ENCODE measurements at regions of chr10 and their contacts with region 1.

Region 1: DNA sequence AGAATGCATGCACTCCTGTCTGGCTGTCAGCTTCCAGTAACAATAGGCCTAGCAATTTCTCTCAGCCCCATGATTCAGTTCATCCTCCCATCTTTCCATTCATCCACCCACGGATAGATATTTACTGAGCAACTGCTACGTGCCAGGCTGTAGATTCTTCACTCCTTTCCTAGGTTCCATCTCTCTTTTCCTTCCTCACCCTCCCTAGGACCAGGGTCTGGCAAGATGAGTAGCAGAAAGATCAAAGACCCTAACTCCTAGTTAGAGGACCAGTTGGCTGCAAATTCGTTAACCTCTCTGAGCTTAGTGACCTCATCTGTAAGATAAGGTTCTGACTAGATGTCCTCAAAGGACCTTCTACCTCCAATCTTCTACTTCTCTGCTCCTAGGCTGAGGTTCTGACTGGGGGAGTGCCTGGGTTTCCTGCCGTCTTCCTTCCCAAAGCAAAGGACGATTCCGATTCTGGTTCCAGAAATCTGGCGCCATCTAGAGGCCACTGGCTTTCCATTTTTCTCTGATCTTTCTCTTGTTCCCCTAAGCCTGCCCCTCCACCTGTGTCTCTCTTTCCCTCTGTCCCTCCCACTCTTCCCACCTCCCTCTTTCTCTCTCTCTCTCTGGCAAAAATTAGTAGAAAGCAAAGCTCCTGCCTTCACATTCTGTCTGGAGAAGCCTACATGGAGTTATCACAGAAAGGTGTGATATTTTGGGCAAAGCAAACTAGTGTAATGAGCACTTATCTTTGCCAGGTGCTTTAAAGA is 26.2 kb downstream of the TBATA start:
- DNase-seq: peak; percentile 44 to 87 (median 72)
- H3K4me3 ChIP-seq: no peak overlapping the region
- H3K27ac ChIP-seq: no peak overlapping the region
- H3K27me3 ChIP-seq: no peaks in the 10 kb centered on the region
- CTCF ChIP-seq: peak; percentile 44 to 98 (median 81)

Region 2: GRCh38 chr10:70461215-70461986 is 297.5 kb before region 1 on chr10:
- intact Hi-C with region 1: loop called (anchors 5 to 10 kb)
- DNase-seq: peak in 7 of 10 donors; percentile 48 to 69 (median 60)
- H3K4me3 ChIP-seq: no peak overlapping the region
- H3K27ac ChIP-seq: peak overlapping the region in 19 of 59 donors; percentile 2 to 63 (median 28)
- H3K27me3 ChIP-seq: no peaks in the 10 kb centered on the region
- CTCF ChIP-seq: peak; percentile 52 to 89 (median 80)

Region 3: DNA sequence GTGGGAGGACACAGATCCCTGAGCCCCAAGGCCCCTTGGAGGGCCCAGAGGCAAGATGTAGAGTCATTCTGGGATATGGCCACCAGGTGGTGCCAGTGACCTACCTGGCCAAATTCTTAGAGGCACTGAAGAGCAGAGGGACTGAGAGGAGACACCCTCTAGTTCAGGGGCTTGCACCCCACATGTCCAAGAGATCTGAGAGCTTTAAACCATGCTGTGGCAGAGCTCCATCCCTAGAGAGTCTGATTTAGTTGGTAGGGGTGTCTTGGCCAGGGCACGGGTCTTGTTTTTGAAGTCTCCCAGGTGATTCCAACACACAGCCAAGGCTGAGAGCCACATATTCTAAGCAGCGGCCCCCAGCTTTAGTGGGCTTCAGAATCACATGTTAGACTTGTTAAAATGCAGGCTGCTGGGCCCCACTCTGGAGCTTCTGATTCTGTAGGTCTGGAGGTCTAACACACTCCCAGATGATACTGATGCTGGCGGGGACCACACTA is 208.9 kb before region 1 on chr10:
- intact Hi-C with region 1: loop called (anchors 1 to 2 kb)
- DNase-seq: peak; percentile 57 to 79 (median 64)
- H3K4me3 ChIP-seq: no peak overlapping the region
- H3K27ac ChIP-seq: peak overlapping the region in 1 of 59 donors; percentile 58
- H3K27me3 ChIP-seq: no peaks in the 10 kb centered on the region
- CTCF ChIP-seq: peak; percentile 82 to 97 (median 93)

Region 4: DNA sequence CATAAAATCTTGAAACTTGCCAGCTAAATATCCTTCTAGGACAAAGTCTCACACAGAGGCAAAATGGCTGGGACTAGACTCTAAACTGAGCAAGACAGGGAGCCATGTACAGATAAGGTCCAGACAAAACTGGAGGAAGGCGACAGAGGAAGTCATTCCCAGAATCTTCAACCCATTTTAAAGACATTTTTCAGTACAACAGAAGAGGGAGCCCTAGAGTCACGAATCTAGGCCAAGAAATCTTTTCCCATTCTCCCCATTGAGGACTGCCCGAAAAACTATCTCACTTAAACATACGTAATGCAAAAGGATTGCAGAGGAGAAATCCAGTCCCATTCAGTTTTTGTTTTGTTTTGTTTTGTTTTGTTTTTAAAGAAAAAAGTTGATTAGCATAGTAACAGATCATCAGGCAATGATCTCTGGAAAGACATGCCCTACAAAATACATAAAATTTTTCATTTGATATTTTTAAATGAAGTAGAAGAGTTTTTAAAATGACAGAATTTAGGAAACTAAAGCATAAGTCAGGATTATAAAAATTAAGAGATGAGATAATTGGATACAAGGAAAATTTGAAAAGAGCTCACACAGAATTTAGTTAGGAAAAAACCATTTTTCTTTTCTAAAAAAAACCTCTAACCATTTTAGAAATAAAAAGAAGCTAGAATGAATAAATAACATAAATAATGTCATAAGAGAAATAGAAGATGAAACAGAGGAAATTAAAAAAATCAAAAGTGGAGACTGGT is 139.5 kb before region 1 on chr10:
- intact Hi-C with region 1: loop called (anchors 2 to 5 kb)
- DNase-seq: no peak
- H3K4me3 ChIP-seq: no peak overlapping the region
- H3K27ac ChIP-seq: no peak overlapping the region
- H3K27me3 ChIP-seq: peaks cover 0 to 6% (median 0%) of the 10 kb centered on the region in 45 donors
- CTCF ChIP-seq: peak in 53 of 56 donors; percentile 16 to 68 (median 42)

Region 5: GRCh38 chr10:70679498-70679897 is 79.4 kb before region 1 on chr10:
- intact Hi-C with region 1: loop called in 1 of 2 experiments (anchors 5 kb)
- DNase-seq: peak in 1 of 10 donors; percentile 30
- H3K4me3 ChIP-seq: no peak overlapping the region
- H3K27ac ChIP-seq: no peak overlapping the region
- H3K27me3 ChIP-seq: peaks cover 0 to 8% (median 0%) of the 10 kb centered on the region in 45 donors
- CTCF ChIP-seq: no peak

Region 6: GRCh38 chr10:70815504-70816219 is 56.7 kb after region 1 on chr10 and contains the start of gene SGPL1:
- intact Hi-C with region 1: loop called in 1 of 2 experiments (anchors 5 kb)
- DNase-seq: peak; percentile 68 to 89 (median 77)
- H3K4me3 ChIP-seq: peak within 1 kb of the TSS; percentile 55 to 88 (median 78)
- H3K27ac ChIP-seq: peak within 1 kb of the TSS in 57 of 59 donors; percentile 3 to 95 (median 81)
- H3K27me3 ChIP-seq: no peaks in the 10 kb centered on the region
- CTCF ChIP-seq: peak; percentile 47 to 99 (median 91)
- total RNA-seq, gene SGPL1: 27.2 to 70.2 (median 47.7) TPM